GM10248 (cell line): ENCODE measurements at regions of chr1 and their contacts with region 1.

Region 1: DNA sequence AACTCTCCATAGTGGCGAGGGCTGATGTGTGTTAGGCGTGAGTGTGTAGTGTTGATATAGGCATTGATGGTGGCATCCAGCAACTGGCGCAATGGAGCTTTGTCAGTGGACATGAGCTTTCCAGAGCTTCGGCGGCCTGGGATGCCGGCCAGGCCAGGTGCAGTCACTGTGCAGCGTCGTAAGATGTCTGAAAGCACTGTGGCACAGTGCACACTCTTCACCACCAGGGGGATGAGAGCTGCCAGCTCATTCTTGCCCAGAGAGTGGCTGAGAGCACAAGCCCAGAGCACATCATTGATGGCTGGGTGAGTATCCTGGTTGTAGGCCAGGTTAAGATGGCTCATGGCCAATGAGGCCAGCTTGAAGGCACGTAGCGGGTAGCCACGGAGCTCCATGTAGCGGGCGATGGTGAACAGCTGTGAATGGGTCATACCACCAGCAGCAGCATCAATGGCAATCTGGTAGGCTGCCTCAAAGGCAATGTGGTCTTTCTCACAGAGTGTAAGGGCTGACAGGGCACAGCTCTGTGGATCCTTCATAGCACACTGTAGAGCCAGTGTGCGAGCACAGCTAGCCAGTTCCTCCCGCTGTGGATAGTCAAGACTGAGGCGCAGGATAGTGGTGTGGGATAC is 6.7 kb downstream of the UROD start:
- DNase-seq: peak; percentile 48
- CTCF ChIP-seq: peak; percentile 61

Region 2: GRCh38 chr1:44947063-44947773 is 71.5 kb before region 1 on chr1:
- CTCF ChIA-PET with region 1: no interaction called
- POLR2A ChIA-PET with region 1: no interaction called
- DNase-seq: no peak
- CTCF ChIP-seq: no peak

Region 3: DNA sequence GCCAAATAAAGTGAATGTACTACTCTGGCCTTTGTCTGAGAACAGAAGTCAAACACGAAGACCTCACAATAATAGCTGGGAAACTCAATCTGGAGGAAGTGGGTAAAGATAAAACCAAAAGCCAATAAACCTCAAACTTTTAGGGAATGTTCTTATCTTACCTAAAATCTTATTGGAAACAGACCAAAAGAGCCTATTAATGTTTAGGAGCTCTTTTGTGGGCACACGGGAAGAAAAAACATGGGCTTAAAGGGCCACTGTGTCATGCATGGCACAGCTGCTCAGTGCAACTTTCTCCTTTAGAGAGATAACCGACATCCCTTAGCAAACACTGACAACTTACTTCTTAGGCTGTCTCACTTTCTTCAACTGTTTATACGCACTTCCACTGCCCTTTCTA is 48.4 kb before region 1 on chr1:
- CTCF ChIA-PET with region 1: no interaction called
- POLR2A ChIA-PET with region 1: no interaction called
- DNase-seq: no peak
- CTCF ChIP-seq: no peak

Region 4: GRCh38 chr1:45002650-45003645 is 15.8 kb before region 1 on chr1:
- CTCF ChIA-PET with region 1: interaction called, 23 read pairs
- POLR2A ChIA-PET with region 1: no interaction called
- DNase-seq: no peak
- CTCF ChIP-seq: no peak

Region 5: GRCh38 chr1:45033356-45033755 is 14.6 kb after region 1 on chr1:
- CTCF ChIA-PET with region 1: interaction called, 26 read pairs
- POLR2A ChIA-PET with region 1: no interaction called
- DNase-seq: peak; percentile 65
- CTCF ChIP-seq: no peak

Region 6: DNA sequence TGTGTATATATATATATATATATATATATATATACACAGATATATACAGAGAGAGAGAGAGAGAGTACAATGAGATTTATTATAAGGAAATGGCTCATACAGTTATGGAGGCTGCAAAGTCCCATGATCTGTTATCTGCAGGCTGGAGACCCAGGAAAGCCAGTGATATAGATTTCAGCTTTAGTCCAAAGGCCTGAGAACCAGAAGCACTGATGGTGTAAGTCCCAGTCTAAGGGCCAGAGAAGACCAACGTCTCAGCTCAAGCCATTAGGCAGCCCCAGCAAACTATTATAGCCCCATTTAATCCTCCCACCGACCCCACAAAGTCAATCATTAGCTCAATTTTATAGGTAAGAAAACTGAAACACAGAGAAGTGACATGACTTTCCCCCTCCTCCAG is 273.0 kb after region 1 on chr1:
- CTCF ChIA-PET with region 1: interaction called, 188 read pairs
- POLR2A ChIA-PET with region 1: no interaction called
- DNase-seq: no peak
- CTCF ChIP-seq: no peak